ENCODE measurements at regions of chr7 and their contacts with region 1.

Region 1: GRCh38 chr7:119935418-119936025 is 337.5 kb upstream of the KCND2 start:
- DNase-seq: peak; percentile 18
- ATAC-seq: no peak
- H3K4me3 ChIP-seq: no peak overlapping the region
- H3K27ac ChIP-seq: no peak overlapping the region
- H3K4me1 ChIP-seq: no peaks in the 10 kb centered on the region
- H3K27me3 ChIP-seq: no peaks in the 10 kb centered on the region
- CTCF ChIP-seq: peak; percentile 43; the same call in 1 of the 2 replicates

Region 2: DNA sequence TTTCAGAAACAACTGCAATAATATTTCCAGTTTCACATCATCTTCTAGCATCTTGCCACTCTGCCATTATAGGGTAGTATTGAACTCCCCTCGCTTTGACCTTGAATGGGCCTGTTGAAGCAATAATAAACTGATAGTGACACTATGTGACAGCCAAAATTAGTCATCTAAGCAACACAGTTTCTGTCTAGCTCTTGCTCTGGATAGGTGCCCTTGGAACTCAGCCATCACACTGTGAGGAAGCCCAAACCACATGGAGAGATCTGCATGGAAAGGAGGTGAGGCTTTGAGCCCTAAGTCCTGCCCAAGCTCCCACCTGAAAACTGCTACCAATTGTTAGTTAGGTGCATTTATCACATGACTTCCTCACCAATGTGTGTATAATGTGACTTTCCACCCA is 319.3 kb after region 1 on chr7:
- CTCF ChIA-PET with region 1: no interaction called
- POLR2A ChIA-PET with region 1: no interaction called
- in situ Hi-C with region 1: no loop called
- intact Hi-C with region 1: no loop called
- DNase-seq: no peak
- ATAC-seq: no peak
- H3K4me3 ChIP-seq: no peak overlapping the region
- H3K27ac ChIP-seq: no peak overlapping the region
- H3K4me1 ChIP-seq: no peaks in the 10 kb centered on the region
- H3K27me3 ChIP-seq: no peaks in the 10 kb centered on the region
- CTCF ChIP-seq: no peak

Region 3: DNA sequence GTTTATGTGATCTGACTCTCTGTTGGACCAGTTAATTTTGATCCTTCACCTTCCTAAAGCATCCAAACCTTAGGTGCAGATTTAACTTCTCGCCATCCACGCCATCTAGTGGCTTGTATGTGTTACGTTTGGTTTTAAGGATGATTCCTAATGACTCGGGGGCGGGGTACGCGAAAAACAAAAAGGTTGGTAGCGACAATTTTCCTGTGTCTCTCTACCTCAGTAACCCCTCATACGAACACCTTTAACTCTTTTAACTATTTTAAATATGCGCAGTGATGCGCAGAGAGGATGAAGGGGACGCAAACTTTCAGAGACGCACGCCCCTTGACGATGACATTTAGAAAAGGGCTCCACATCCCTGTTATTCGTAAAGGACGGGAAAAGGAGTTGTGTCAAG is 336.7 kb after region 1 on chr7:
- CTCF ChIA-PET with region 1: no interaction called
- POLR2A ChIA-PET with region 1: no interaction called
- in situ Hi-C with region 1: no loop called
- intact Hi-C with region 1: loop called (anchors 2 kb)
- DNase-seq: no peak
- ATAC-seq: peak; percentile 88
- H3K4me3 ChIP-seq: peak overlapping the region; percentile 33 to 40
- H3K27ac ChIP-seq: no peak overlapping the region
- H3K4me1 ChIP-seq: no peaks in the 10 kb centered on the region; the same call in 1 of the 2 replicates
- H3K27me3 ChIP-seq: no peaks in the 10 kb centered on the region
- CTCF ChIP-seq: peak; percentile 85

Region 4: GRCh38 chr7:120554960-120555571 is 619.5 kb after region 1 on chr7:
- CTCF ChIA-PET with region 1: no interaction called
- POLR2A ChIA-PET with region 1: no interaction called
- in situ Hi-C with region 1: no loop called
- intact Hi-C with region 1: loop called (anchors 10 kb)
- DNase-seq: peak; percentile 18
- ATAC-seq: peak; percentile 76; the same call in 1 of the 2 replicates
- H3K4me3 ChIP-seq: no peak overlapping the region
- H3K27ac ChIP-seq: no peak overlapping the region
- H3K4me1 ChIP-seq: no peaks in the 10 kb centered on the region
- H3K27me3 ChIP-seq: no peaks in the 10 kb centered on the region
- CTCF ChIP-seq: peak; percentile 67

Measured in Panc1 (cell line).